ENCODE measurements at regions of chr10 and their contacts with region 1.

Region 1: DNA sequence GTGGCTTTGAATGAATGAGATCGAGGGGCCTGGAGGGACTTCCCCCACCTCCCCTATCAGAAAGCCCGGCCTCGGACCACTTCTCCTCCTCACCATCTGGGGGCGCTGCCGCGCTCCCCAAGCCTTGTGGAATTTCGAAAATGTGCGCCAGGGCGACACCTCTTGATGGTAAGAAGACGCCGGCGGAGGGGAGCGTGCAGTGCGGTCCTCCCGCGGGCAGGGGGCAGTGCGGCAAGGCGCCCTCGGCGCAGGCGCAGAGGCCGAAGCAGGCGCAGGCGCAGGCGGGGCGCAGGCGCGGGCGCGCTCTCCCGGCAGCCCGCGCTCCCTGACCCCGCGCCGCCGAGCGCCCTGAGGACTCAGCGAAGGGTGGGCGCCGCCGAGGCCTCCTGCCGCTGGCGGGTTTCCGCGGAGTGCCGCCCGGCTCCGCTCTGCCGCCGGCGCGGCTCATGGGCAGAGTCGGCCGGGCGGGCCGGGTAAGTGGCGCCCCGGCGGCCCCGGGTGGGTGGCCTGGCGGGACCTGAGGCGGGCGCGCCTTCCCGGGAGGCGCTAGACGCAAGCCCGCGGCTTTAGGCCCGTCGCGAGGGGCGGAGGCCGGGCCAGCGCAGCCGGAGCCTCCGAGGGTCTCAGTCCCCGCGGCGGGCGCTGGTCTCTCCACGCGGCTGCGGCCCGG is at the start of gene RBM17:
- DNase-seq: peak; percentile 99
- H3K4me3 Mint-ChIP-seq: peak within 1 kb of the TSS; percentile 86
- H3K27ac Mint-ChIP-seq: peak within 1 kb of the TSS; percentile 85
- H3K4me1 Mint-ChIP-seq: peaks cover 60% of the 10 kb centered on the region
- H3K27me3 Mint-ChIP-seq: peaks cover 2% of the 10 kb centered on the region
- total RNA-seq, gene RBM17: 258 and 262 TPM in 2 replicates

Region 2: GRCh38 chr10:4638099-4638498 is 1450.8 kb before region 1 on chr10:
- intact Hi-C with region 1: no loop called
- DNase-seq: no peak
- H3K4me3 Mint-ChIP-seq: no peak overlapping the region
- H3K27ac Mint-ChIP-seq: no peak overlapping the region
- H3K4me1 Mint-ChIP-seq: no peaks in the 10 kb centered on the region
- H3K27me3 Mint-ChIP-seq: peaks cover 2% of the 10 kb centered on the region

Region 3: DNA sequence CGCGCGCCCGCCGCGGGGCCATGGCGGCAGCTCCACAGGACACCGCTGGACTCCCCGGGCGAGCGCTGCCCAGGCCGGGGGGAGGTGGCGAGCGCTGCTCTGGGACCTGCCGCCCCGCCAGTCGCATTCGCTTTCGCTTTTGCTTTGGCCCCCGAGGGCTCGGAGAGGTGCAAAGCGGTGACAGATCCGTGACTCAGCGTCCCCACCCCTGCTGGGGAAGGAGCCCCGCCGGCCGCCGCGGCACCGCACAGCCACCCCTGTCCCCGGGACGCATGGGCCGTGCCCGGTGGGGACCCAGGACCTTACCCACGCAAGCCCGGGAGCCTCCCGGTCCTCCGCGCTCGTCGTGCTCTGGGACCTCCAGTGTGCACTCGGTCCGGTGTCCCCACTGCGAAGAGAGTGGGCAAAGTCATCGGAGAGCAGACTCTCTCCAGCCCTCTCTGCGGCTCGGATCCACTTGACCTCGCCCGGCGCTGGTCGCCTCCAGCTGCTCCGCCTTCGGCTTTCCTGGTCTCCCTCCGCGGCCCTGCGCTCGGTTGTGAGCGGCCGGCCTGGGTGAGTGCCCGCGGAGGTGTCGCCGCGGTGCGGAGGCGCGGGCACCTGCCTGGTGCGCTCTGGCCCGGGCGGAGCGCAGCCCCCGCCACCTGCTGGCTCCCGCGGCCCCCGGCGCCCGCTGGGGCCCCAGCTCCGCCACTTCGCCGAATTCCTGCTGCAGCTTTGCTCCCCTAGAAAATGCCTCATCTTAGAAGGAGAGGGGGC is 111.2 kb before region 1 on chr10 and contains the start of gene IL15RA:
- intact Hi-C with region 1: loop called (anchors 2 kb)
- DNase-seq: peak; percentile 97
- H3K4me3 Mint-ChIP-seq: peak within 1 kb of the TSS; percentile 97
- H3K27ac Mint-ChIP-seq: peak within 1 kb of the TSS; percentile 95
- H3K4me1 Mint-ChIP-seq: peaks cover 27% of the 10 kb centered on the region
- H3K27me3 Mint-ChIP-seq: peaks cover 4% of the 10 kb centered on the region
- total RNA-seq, gene IL15RA: 24.4 and 25.5 TPM in 2 replicates

Region 4: GRCh38 chr10:6014241-6014761 is 74.6 kb before region 1 on chr10:
- intact Hi-C with region 1: loop called (anchors 1 kb)
- DNase-seq: peak; percentile 89
- H3K4me3 Mint-ChIP-seq: peak overlapping the region; percentile 59
- H3K27ac Mint-ChIP-seq: peak overlapping the region; percentile 81
- H3K4me1 Mint-ChIP-seq: peaks cover 51% of the 10 kb centered on the region
- H3K27me3 Mint-ChIP-seq: no peaks in the 10 kb centered on the region

Region 5: DNA sequence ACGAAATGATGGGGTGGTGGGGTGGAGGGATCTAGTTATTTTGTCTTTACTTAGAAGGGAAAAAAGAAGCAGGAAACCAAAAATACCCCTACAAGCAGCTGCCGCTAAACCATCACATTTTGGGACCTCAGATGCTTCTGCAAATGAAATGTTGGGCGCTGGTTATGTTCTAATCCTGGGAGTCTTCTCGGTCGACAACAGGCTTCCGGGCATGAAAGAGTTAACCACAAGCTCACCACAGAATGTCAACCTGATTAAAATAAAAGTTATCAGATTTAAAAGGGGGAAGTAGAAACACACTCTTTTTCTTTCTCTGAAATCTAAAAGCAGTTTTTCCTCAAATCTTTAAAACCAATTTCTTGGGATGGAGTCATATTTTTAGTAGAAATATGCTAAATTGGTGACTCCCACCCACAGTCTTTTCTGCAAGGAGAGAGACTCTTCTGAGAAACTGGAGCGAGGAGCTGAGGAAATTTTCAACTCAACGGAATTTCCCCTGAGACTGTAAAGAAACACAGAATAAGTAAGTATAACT is 43.5 kb before region 1 on chr10:
- intact Hi-C with region 1: loop called (anchors 1 kb)
- DNase-seq: peak; percentile 82
- H3K4me3 Mint-ChIP-seq: peak overlapping the region; percentile 80
- H3K27ac Mint-ChIP-seq: peak overlapping the region; percentile 95
- H3K4me1 Mint-ChIP-seq: peaks cover 76% of the 10 kb centered on the region
- H3K27me3 Mint-ChIP-seq: no peaks in the 10 kb centered on the region

Region 6: DNA sequence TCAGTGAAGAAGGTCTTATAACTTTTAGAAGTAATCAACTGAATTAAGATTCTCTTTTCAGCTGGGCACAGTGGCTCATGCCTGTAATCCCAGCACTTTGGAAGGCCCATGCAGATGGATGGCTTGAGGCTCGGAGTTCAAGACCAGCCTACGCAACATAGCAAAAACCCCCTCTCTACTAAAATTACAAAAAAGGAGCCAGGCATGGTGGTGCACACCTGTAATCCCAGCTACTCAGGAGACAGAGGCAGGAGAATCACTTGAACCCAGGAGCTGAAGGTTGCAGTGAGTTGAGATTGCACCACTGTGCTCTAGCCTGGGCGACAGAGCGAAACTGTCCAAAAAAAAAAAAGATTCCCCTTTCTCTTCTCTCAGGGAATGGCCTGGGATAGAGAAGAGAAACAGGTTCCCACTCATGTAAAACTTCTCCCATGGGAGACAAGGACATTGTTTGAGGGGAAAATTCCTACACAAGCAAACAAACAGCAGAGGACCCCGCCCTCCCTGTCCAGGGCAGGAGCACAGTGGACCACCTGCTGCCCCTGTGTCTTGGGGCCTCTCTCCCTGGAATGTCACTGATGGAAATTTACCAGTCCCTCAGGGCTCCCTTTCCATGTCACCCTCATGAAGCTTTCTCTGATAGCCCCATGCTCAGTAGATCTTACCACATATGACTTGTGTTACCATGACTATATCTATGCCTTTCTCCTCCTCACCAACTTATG is 32.3 kb before region 1 on chr10:
- intact Hi-C with region 1: no loop called
- DNase-seq: peak; percentile 56
- H3K4me3 Mint-ChIP-seq: peak overlapping the region; percentile 91
- H3K27ac Mint-ChIP-seq: peak overlapping the region; percentile 96
- H3K4me1 Mint-ChIP-seq: peaks cover 64% of the 10 kb centered on the region
- H3K27me3 Mint-ChIP-seq: no peaks in the 10 kb centered on the region

Region 7: GRCh38 chr10:6498771-6499170 is 409.9 kb after region 1 on chr10:
- intact Hi-C with region 1: loop called (anchors 10 kb)
- DNase-seq: peak; percentile 89
- H3K4me3 Mint-ChIP-seq: peak overlapping the region; percentile 78
- H3K27ac Mint-ChIP-seq: peak overlapping the region; percentile 84
- H3K4me1 Mint-ChIP-seq: peaks cover 42% of the 10 kb centered on the region
- H3K27me3 Mint-ChIP-seq: no peaks in the 10 kb centered on the region

Region 8: DNA sequence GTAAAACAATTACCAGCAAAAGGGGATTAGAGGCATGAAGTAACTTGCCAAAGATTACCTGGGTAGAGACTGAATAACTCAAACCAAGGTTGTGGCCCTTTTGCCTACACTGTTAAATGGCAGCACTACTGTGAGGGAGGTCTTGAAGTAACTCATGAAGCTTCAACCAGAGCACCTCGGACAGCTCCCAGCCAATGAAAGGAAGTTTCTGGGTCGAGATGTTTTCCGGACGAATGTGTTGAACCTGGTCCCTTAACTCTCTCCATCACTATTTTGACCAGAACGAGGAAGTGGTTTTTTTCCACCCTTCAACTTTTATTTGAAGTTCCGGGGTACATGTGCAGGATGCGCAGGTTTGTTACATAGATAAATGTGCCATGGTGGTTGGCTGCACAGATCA is 624.9 kb after region 1 on chr10:
- intact Hi-C with region 1: no loop called
- DNase-seq: peak; percentile 60
- H3K4me3 Mint-ChIP-seq: no peak overlapping the region
- H3K27ac Mint-ChIP-seq: no peak overlapping the region
- H3K4me1 Mint-ChIP-seq: peaks cover 5% of the 10 kb centered on the region
- H3K27me3 Mint-ChIP-seq: peaks cover 38% of the 10 kb centered on the region